CD4-positive, alpha-beta T cell (primary cell): ENCODE measurements at regions of chr10 and their contacts with region 1.

Region 1: DNA sequence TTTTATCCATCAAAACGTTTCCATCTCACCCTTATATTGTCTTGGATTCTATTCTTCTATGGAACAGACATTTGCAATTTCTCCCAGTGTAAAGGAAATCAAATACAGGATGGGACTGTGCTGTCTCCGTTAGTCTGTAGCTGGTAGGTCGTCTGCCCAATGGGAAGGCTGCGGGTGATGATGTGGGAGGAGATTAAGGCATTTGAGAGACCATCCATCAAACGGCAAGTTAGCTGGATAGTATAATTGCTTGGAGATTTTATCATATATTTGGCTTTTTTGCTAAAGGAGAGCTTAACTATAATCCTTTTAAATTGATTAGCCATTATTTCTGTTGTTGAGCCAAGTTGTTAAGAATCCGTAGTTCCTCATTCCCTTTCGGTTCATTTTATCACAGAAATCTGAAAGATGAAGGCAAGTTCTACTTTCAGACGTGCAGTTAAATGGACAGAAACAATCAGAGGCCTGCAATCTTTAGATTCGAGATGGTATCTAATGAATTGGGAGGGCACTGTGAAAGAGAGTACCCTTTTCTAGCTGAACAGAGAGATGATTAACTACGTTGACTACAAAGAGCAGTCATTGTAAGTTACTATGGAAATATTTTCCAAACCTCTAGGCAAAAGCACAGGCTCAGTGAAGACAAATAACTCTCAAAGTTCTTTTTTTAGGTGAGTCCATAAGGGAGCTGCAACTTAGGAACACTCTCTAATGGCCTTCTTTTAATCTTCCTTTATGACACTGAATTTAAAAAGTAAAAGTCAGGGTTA is 253.3 kb upstream of the KIAA1217 start:
- DNase-seq: no peak
- ATAC-seq: no peak
- H3K4me3 ChIP-seq: no peak overlapping the region
- H3K4me3 Mint-ChIP-seq: no peak overlapping the region
- H3K27ac ChIP-seq: no peak overlapping the region
- H3K27ac Mint-ChIP-seq: no peak overlapping the region
- H3K4me1 ChIP-seq: no peaks in the 10 kb centered on the region
- H3K4me1 Mint-ChIP-seq: no peaks in the 10 kb centered on the region
- H3K27me3 ChIP-seq: no peaks in the 10 kb centered on the region
- H3K27me3 Mint-ChIP-seq: no peaks in the 10 kb centered on the region
- CTCF ChIP-seq: no peak

Region 2: DNA sequence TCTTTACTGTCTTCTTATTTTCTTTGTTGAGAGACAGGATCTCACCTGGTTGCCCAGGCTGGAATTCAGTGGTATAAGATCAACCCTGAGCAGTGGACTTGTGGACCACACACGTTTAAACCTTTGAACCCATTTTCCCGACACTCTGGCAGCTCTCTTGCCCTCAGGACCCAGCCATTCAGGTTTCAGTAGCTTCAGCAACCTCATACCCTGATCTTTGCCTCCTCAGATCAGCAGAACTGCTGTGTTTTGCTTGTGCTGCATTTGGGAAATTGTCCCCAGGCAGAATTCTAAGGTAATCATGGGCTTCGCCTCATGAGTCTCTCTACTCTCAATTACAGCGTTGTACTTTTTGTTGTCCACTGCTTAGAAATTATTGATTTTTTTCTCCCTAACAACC is 64.3 kb before region 1 on chr10:
- CTCF ChIA-PET with region 1: no interaction called
- POLR2A ChIA-PET with region 1: no interaction called
- intact Hi-C with region 1: loop called in 1 of 2 experiments (anchors 2 kb)
- DNase-seq: no peak
- ATAC-seq: no peak
- H3K4me3 ChIP-seq: no peak overlapping the region
- H3K4me3 Mint-ChIP-seq: no peak overlapping the region
- H3K27ac ChIP-seq: no peak overlapping the region
- H3K27ac Mint-ChIP-seq: no peak overlapping the region
- H3K4me1 ChIP-seq: no peaks in the 10 kb centered on the region
- H3K4me1 Mint-ChIP-seq: no peaks in the 10 kb centered on the region
- H3K27me3 ChIP-seq: no peaks in the 10 kb centered on the region
- H3K27me3 Mint-ChIP-seq: no peaks in the 10 kb centered on the region
- CTCF ChIP-seq: no peak

Region 3: DNA sequence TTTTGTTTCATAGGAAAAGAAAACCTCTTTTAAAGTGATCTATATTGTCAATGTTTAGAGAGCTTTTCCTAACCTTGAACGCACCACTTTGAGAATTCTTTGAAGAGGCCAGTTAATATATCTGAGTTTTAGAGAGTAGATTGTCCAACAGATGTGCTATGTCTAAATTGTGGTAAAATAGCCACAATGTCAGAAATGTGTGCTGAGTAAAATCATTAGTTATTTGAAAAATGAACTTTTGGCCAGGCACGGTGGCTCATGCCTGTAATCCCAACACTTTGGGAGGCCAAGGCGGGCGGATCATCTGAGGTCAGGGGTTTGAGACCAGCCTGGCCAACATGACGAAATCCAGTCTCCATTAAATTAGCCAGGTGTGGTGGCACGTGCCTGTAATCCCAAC is 191.7 kb after region 1 on chr10:
- CTCF ChIA-PET with region 1: no interaction called
- POLR2A ChIA-PET with region 1: no interaction called
- intact Hi-C with region 1: no loop called
- DNase-seq: no peak
- ATAC-seq: no peak
- H3K4me3 ChIP-seq: no peak overlapping the region
- H3K4me3 Mint-ChIP-seq: no peak overlapping the region
- H3K27ac ChIP-seq: no peak overlapping the region
- H3K27ac Mint-ChIP-seq: no peak overlapping the region
- H3K4me1 ChIP-seq: no peaks in the 10 kb centered on the region
- H3K4me1 Mint-ChIP-seq: no peaks in the 10 kb centered on the region
- H3K27me3 ChIP-seq: no peaks in the 10 kb centered on the region
- H3K27me3 Mint-ChIP-seq: no peaks in the 10 kb centered on the region
- CTCF ChIP-seq: no peak